ENCODE measurements at regions of chr22 and their contacts with region 1.

Region 1: DNA sequence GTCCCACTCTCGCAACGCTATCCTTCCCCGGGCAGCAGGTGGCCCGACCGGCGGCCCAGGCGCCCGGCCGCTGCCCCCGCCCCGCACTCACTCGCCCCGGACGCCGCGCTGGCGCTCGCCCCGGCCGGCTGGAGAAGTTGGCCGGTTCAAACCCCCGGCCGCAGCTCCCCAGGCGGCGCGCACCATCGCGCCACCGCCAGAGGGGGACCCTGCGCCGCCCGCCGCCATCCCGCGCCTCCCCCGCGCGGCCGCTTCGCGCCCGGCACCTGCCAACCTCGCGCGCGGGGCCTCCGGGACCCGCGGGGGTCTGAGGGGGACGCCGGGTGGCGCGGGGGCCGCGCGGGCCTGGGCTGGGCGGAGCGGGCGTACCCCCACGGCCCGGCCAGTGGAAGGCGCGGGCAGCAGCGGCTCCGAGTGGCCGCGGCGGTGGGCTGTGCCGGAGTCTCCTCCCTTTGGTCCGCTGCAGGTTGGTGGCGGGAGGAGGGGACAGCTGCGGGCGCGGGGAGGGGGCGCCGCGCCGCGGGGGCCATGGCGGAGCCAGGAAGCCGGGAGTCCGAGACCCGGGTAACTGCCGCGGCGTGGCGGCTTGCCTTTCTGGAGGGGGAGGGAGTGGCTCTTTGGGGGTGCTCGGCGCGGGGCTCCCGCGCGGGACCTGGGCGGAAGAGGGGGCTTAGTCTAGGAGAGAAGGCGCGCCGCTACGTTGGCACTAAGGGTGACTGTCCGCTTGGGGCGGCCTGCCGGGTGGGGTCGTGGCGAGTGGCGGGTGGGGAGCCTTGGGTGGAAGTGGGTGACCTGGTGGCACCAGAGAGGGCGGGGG is at the starts of genes MPST and TST:
- DNase-seq: peak; percentile 87
- CTCF ChIP-seq: no peak

Region 2: DNA sequence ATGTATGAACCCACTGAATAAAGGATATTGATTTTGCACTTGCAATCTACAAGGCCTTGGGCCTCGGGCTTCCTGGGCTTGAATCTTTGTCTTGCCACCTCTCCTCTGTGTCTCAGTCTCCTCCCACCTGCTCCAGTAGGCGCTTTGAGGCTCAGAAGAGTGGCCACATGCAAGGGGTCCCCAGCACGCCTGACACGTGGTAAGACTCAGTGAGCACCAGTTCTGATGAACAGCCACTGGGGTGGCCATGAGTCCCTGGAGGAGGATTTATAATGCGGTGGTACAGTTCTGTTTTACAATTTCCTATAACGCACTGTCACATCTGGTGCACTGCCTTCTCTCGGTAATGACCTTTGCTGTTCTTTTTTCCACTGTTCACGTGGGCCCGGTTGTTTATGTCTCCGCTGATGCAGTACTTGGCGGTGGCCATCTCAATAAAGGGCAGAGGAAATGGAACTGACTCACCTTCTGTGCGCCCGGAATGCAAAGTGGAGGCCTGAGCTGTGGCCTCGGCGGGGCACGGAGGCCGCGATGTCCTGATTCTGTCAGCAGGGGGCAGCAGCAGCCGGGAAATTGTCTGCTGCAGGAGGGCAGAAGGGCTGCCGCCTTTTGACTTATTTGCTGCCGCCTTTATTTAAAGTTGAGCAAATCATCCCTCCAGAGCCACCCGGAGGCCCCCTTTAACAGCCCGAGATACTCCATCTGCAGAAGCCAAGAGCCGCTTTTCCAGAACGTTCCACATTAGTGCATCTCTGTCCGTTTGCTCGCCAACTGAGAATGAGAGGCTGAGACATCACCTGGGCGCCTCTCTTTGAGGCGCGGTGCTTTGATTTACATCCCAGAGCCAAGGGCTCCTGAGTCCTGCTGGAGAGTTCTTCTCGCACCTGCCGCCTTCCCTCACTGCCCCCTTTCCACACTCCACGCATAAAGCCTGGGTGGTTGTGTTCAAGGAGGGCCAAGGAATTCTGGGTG is 237.6 kb before region 1 on chr22:
- CTCF ChIA-PET with region 1: interaction called, 10 read pairs
- POLR2A ChIA-PET with region 1: no interaction called
- DNase-seq: peak; percentile 90
- CTCF ChIP-seq: peak; percentile 98

Region 3: GRCh38 chr22:37032546-37033460 is 13.3 kb after region 1 on chr22:
- CTCF ChIA-PET with region 1: interaction called, 14 read pairs
- POLR2A ChIA-PET with region 1: no interaction called
- DNase-seq: no peak
- CTCF ChIP-seq: no peak

Region 4: GRCh38 chr22:37098976-37099591 is 79.6 kb after region 1 on chr22:
- CTCF ChIA-PET with region 1: no interaction called
- POLR2A ChIA-PET with region 1: no interaction called
- DNase-seq: no peak
- CTCF ChIP-seq: peak; percentile 15

Measured in GM10248 (cell line).